CD4-positive, alpha-beta memory T cell (primary cell): ENCODE measurements at regions of chr12 and their contacts with region 1.

Region 1: DNA sequence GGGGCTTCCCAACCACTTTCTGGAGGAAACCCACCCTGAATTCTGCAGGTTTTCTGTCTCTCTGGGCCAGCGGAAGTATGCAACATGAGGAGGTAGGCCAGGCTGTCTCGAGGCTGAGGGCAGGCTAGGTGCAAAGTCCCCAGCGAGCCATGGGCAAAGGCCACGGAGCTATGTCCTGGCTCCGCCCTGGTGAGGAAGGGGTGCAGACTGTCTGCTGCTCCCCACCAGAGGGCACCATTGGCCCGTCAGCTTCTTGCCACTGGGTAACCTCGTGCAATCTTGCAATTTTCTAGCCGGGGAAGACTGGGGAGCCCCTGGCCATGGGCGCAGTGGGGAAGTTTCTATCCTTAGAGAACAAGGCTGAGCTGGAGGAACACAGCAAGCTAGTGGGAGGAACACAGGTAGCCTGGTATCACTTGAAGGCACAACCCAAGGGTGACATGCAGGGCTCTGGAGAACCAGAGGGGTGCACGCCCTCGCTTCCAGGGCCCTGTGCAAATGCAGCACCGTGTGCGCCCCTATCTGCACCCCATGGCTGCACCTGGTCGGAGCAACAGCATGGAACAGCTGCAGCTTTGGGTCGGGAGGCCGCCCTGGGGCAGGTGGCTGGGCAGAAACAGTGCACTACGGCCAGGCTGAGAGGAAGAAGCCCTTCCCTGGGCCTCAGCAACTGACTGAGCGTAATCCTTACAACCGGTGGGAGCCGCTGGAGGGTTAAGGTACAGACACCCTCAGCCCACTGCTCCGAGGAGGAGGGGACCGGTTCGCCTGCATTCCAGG is 27.6 kb upstream of the RPLP0 start:
- DNase-seq: peak; percentile 84 to 87 (median 86)
- H3K4me3 ChIP-seq: peak overlapping the region in 1 of 2 donors; percentile 3
- H3K4me3 Mint-ChIP-seq: peak overlapping the region; percentile 65 to 84 (median 70)
- H3K27ac ChIP-seq: peak overlapping the region; percentile 43
- H3K27ac Mint-ChIP-seq: peak overlapping the region; percentile 29 to 94 (median 86)
- H3K4me1 ChIP-seq: peaks cover 85% of the 10 kb centered on the region
- H3K4me1 Mint-ChIP-seq: peaks cover 59 to 86% (median 75%) of the 10 kb centered on the region in 4 donors
- H3K27me3 ChIP-seq: no peaks in the 10 kb centered on the region
- H3K27me3 Mint-ChIP-seq: no peaks in the 10 kb centered on the region

Region 2: DNA sequence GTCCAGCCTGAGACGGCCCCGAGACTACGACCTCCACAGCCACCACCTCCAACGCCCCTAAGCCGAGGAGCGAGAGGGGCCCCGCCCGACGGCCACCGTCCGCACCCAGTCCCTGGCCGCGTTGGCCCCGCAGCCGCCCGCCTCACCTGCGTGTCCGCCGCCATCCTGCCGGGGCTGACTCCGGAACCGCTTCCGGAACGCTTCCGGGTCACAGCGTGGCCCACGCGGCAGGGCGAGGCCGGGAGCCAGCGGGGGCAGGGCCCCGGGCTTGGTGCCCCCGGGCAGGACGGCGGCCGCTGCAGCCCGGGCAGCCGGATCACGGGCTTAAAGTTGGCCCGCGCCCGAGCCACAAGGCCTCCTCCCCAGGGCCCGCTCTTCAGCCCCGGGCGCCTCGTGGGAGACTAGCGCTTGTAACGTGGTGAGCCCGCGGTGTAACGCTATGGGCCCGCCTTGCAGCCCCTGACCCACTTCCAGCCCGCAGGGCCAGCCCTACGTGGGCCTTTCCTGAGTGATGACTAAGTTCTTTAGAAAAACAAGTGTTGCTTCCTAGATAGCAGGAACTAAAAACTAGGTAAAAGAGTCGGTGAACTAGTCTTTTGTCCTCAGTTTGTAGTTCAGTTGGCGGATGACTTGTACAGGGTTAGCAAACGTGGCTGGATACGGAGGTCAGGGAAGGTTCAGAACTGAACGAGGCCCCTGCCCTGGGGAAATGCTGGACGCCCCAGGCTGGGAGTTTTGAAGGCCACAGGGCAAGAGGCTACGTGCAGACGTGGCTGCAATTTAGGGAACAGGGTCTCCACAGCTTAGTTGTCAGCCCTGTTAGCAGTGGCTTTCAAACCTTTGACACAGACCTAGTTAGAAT is 33.7 kb before region 1 on chr12 and contains the start of gene GCN1:
- CTCF ChIA-PET with region 1: interaction called, 4 read pairs
- POLR2A ChIA-PET with region 1: interaction called, 114 read pairs
- intact Hi-C with region 1: no loop called
- DNase-seq: peak; percentile 87 to 92 (median 89)
- H3K4me3 ChIP-seq: peak within 1 kb of the TSS; percentile 74 to 89
- H3K4me3 Mint-ChIP-seq: peak within 1 kb of the TSS; percentile 86 to 93 (median 90)
- H3K27ac ChIP-seq: peak within 1 kb of the TSS; percentile 79
- H3K27ac Mint-ChIP-seq: peak within 1 kb of the TSS; percentile 97 to 98 (median 98)
- H3K4me1 ChIP-seq: peaks cover 55% of the 10 kb centered on the region
- H3K4me1 Mint-ChIP-seq: peaks cover 30 to 70% (median 40%) of the 10 kb centered on the region in 4 donors
- H3K27me3 ChIP-seq: no peaks in the 10 kb centered on the region
- H3K27me3 Mint-ChIP-seq: no peaks in the 10 kb centered on the region
- total RNA-seq, gene GCN1: 127 to 132 TPM

Region 3: GRCh38 chr12:120209851-120210250 is 18.6 kb before region 1 on chr12:
- CTCF ChIA-PET with region 1: interaction called, 82 read pairs
- POLR2A ChIA-PET with region 1: interaction called, 6 read pairs
- intact Hi-C with region 1: no loop called
- DNase-seq: no peak
- H3K4me3 ChIP-seq: no peak overlapping the region
- H3K4me3 Mint-ChIP-seq: no peak overlapping the region
- H3K27ac ChIP-seq: no peak overlapping the region
- H3K27ac Mint-ChIP-seq: peak overlapping the region in 1 of 7 donors; percentile 26
- H3K4me1 ChIP-seq: no peaks in the 10 kb centered on the region
- H3K4me1 Mint-ChIP-seq: peaks cover 0 to 7% (median under 1%) of the 10 kb centered on the region in 4 donors
- H3K27me3 ChIP-seq: no peaks in the 10 kb centered on the region
- H3K27me3 Mint-ChIP-seq: no peaks in the 10 kb centered on the region

Region 4: GRCh38 chr12:120249875-120250795 is 21.7 kb after region 1 on chr12:
- CTCF ChIA-PET with region 1: interaction called, 1,075 read pairs
- POLR2A ChIA-PET with region 1: interaction called, 247 read pairs
- intact Hi-C with region 1: loop called (anchors 1 kb)
- DNase-seq: peak; percentile 52 to 61 (median 59)
- H3K4me3 ChIP-seq: peak overlapping the region; percentile 4 to 49
- H3K4me3 Mint-ChIP-seq: peak overlapping the region; percentile 65 to 91 (median 82)
- H3K27ac ChIP-seq: peak overlapping the region; percentile 50
- H3K27ac Mint-ChIP-seq: peak overlapping the region; percentile 81 to 99 (median 95)
- H3K4me1 ChIP-seq: peaks cover 90% of the 10 kb centered on the region
- H3K4me1 Mint-ChIP-seq: peaks cover 67 to 88% (median 78%) of the 10 kb centered on the region in 4 donors
- H3K27me3 ChIP-seq: no peaks in the 10 kb centered on the region
- H3K27me3 Mint-ChIP-seq: no peaks in the 10 kb centered on the region

Region 5: GRCh38 chr12:120283318-120283717 is 54.8 kb after region 1 on chr12:
- CTCF ChIA-PET with region 1: interaction called, 10 read pairs
- POLR2A ChIA-PET with region 1: interaction called, 5 read pairs
- intact Hi-C with region 1: no loop called
- DNase-seq: no peak
- H3K4me3 ChIP-seq: no peak overlapping the region
- H3K4me3 Mint-ChIP-seq: no peak overlapping the region
- H3K27ac ChIP-seq: no peak overlapping the region
- H3K27ac Mint-ChIP-seq: no peak overlapping the region
- H3K4me1 ChIP-seq: no peaks in the 10 kb centered on the region
- H3K4me1 Mint-ChIP-seq: peaks cover 0 to 4% (median under 1%) of the 10 kb centered on the region in 4 donors
- H3K27me3 ChIP-seq: no peaks in the 10 kb centered on the region
- H3K27me3 Mint-ChIP-seq: no peaks in the 10 kb centered on the region